ENCODE measurements at regions of chr9 and their contacts with region 1.

Region 1: DNA sequence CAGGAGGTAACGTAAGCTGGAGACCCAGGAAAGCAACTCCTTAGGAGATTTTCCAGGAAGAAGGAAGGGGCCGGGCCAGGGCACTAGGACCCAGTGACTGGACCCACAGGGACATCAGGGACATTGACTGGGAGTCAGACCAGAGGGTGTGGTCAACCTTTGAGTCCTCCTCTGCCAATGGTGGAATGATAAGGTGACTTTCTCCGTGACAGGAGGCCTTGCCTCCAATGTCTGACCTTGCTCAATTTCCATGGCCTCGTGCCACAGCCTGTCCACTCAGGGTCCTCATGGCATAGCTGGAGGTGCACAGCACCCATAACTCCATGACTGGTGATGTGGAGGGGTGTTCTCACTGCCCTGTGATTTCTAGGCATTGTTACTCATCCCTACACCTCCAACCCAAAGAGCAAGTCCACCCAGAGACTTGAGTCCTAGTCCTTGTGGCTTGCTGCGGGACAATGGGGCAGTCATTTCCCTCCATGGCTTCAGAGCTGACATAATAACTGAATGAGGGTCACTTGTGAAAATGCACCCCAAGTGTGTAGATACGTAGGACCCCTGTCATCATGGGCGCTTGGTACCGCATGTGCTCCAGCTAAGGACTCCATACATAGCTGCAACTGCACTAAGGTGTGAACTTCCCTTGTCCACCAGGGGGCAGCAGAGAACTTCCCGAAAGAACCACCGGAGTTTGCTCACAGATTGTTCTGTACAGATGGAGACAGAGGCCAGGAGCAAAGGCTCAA is 4.1 kb upstream of the AMBP start:
- DNase-seq: peak; percentile 91 to 93
- H3K4me3 ChIP-seq: no peak overlapping the region
- H3K27ac ChIP-seq: peak overlapping the region in 1 of 3 donors; percentile 29
- H3K4me1 ChIP-seq: peaks cover 0 to 2% of the 10 kb centered on the region in 2 donors
- H3K27me3 ChIP-seq: no peaks in the 10 kb centered on the region
- CTCF ChIP-seq: peak; percentile 85 to 93 (median 90)
- POLR2A ChIP-seq: no peak

Region 2: DNA sequence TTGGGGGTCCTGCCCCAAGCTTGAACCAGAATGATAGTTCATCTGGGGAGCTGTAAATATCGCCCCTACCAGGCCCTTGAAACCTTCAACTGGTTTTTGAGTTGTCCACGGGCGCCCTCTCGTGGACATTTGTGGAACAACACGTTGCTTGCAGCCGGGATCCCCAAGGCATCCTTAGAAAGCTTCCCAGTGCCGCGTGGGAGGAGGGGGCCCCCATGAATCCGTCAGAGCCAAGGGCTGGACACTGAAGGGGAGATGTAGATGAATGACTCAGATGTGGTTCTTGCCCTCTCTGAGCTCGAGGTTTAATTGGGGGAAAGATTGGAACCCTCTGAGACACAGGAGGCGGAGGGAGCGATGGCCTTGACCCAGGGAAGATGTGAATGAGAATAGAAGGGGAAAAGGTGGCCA is 208.9 kb after region 1 on chr9:
- intact Hi-C with region 1: loop called (anchors 5 kb)
- DNase-seq: peak; percentile 63 to 69
- H3K4me3 ChIP-seq: no peak overlapping the region
- H3K27ac ChIP-seq: no peak overlapping the region
- H3K4me1 ChIP-seq: no peaks in the 10 kb centered on the region
- H3K27me3 ChIP-seq: no peaks in the 10 kb centered on the region
- CTCF ChIP-seq: peak; percentile 84 to 90 (median 87)
- POLR2A ChIP-seq: no peak

Measured in thyroid gland (tissue), 4 donors.